ENCODE measurements at regions of chr17 and their contacts with region 1.

Region 1: DNA sequence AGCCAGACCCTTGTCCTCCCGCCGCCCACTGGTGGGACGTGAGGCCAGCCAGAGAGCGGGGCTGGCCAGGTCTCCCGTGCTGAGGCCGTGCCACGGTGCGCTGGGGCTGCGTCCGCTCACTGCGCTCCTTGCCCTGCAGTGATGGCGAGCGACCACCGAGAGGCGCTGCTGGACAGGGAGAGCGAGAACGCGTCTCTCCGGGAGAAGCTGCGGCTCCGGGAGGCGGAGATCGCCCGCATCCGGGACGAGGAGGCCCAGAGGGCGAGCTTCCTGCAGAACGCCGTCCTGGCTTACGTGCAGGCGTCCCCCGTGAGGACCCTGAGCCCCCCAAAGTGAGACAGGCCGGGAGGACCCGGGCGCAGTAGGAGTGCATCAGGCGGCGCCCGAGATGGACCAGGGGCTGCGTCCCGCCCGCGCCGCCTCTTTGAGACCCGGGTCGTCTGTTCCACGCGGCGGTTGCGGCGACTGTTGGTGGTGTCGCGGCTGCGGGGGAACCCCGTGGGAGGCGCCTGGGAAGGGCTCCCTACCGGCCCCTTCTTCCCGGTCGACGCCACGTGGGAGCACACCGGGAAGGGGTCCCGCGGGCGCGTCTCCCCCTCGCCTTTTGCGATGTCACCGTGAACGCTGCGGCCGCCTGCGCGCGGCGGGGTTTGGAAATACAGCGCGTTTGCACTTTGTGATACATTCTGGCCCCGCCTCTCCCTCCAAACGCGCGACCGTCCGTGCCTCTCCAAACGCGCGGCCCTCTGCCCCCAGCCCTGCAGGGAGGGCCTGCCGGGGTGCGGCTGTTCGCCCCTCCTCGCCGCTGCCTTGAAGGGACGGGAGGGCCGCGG is 792 bp upstream of the RAC3 start:
- DNase-seq: peak; percentile 72
- ATAC-seq: peak; percentile 63
- H3K4me3 ChIP-seq: peak overlapping the region; percentile 62 to 71
- H3K27ac ChIP-seq: peak overlapping the region; percentile 93
- H3K4me1 ChIP-seq: peaks cover 10 to 50% of the 10 kb centered on the region in 2 experiments; a peak in 3 of 4 replicates
- H3K27me3 ChIP-seq: no peaks in the 10 kb centered on the region
- CTCF ChIP-seq: peak; percentile 53 to 94 (median 76)
- POLR2A ChIP-seq: no peak
- RAD21 ChIP-seq: peak; percentile 99

Region 2: DNA sequence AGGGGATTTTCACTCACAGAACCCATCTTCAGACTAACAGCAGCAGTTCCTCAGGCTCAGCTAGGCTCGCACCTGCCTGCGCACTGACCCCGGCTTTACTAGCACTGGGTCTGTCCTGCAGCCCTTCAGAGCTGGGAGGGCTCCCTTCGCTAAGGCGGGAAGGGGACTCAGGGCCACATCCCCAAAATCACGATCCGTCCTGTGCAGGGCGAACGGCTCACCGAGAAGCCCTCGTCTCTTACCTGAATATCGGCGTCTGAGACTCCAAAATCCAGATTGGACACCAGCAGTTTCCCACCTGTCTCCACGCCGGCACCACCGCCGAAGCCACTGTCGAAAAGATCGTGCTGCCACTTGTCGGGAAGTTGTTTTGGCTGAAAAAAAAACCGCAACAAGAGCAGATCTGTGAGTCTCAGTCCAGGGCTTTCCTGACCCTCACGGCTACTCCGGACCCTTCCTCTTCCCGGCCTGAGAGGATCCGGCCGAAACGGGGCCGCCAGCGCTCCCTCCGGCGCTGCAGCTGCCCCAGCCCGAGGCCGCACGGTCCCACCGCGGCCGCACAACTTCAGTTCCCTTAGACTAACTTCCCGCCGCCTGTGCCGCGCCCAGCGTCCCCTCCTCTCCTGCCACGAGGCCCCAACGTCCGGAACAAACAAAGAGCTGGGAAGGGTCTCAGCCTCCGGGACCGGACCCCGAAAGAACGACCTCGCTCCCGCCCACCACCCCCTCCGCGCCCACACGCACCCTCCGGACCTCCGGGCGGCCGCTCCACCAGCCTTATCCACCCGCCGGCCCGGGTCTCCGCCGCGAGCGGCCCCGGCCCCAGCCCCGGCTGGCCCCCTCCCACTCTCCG is 140.0 kb before region 1 on chr17:
- CTCF ChIA-PET with region 1: no interaction called
- POLR2A ChIA-PET with region 1: no interaction called
- RAD21 ChIA-PET with region 1: no interaction called
- intact Hi-C with region 1: no loop called
- DNase-seq: no peak
- ATAC-seq: no peak
- H3K4me3 ChIP-seq: peak overlapping the region; percentile 95 to 98
- H3K27ac ChIP-seq: peak overlapping the region; percentile 97
- H3K4me1 ChIP-seq: peaks cover 15 to 34% of the 10 kb centered on the region in 2 experiments
- H3K27me3 ChIP-seq: no peaks in the 10 kb centered on the region
- CTCF ChIP-seq: no peak
- POLR2A ChIP-seq: no peak
- RAD21 ChIP-seq: no peak

Region 3: DNA sequence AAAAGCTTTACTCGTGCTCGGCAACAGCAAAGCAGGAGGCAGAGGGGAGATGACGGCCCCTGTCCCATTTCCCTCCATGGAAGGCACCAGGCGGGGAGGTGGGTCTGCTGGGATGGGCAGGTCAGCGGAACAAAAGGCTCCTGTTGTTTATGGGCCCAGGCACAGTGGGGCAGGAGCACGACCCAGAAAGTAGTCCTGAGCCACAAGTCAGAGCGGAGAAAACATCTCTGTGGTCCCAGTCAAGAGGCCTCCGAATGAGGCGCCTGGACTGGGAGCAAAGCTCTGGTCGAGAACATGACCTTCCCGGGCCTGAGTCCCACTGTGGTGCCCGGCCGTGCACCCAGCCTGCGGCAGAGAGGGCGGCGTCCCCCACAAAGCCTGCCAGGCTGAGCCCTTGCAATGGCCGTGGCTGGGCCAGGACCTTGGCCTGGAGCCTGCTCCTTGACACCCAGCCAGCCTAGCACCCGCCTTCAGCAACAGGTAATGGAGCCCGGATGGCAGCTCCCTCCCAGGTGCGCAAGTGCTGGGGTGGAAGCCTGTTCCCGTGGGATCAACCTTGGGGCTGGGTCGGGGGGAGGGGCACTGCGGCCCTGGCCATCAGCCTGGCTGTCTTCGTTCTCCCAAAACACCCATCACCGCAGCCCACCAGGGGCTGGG is 17.4 kb after region 1 on chr17:
- CTCF ChIA-PET with region 1: no interaction called
- POLR2A ChIA-PET with region 1: no interaction called
- RAD21 ChIA-PET with region 1: no interaction called
- intact Hi-C with region 1: no loop called
- DNase-seq: no peak
- ATAC-seq: no peak
- H3K4me3 ChIP-seq: no peak overlapping the region
- H3K27ac ChIP-seq: no peak overlapping the region; the same call in 1 of the 2 replicates
- H3K4me1 ChIP-seq: peaks cover 8 to 15% of the 10 kb centered on the region in 2 experiments; a peak in 3 of 4 replicates
- H3K27me3 ChIP-seq: no peaks in the 10 kb centered on the region
- CTCF ChIP-seq: no peak
- POLR2A ChIP-seq: no peak
- RAD21 ChIP-seq: no peak

Region 4: GRCh38 chr17:82105882-82106687 is 75.4 kb after region 1 on chr17:
- CTCF ChIA-PET with region 1: interaction called, 15 read pairs
- POLR2A ChIA-PET with region 1: no interaction called
- RAD21 ChIA-PET with region 1: interaction called in 1 of 2 experiments, 4 read pairs
- intact Hi-C with region 1: no loop called
- DNase-seq: peak; percentile 82
- ATAC-seq: peak; percentile 95
- H3K4me3 ChIP-seq: peak overlapping the region; percentile 68 to 70
- H3K27ac ChIP-seq: peak overlapping the region; percentile 94
- H3K4me1 ChIP-seq: peaks cover 37 to 55% of the 10 kb centered on the region in 2 experiments
- H3K27me3 ChIP-seq: no peaks in the 10 kb centered on the region
- CTCF ChIP-seq: peak in 2 of 3 experiments; percentile 71 to 91; a peak in 4 of 6 replicates
- POLR2A ChIP-seq: peak; percentile 95
- RAD21 ChIP-seq: no peak

Region 5: DNA sequence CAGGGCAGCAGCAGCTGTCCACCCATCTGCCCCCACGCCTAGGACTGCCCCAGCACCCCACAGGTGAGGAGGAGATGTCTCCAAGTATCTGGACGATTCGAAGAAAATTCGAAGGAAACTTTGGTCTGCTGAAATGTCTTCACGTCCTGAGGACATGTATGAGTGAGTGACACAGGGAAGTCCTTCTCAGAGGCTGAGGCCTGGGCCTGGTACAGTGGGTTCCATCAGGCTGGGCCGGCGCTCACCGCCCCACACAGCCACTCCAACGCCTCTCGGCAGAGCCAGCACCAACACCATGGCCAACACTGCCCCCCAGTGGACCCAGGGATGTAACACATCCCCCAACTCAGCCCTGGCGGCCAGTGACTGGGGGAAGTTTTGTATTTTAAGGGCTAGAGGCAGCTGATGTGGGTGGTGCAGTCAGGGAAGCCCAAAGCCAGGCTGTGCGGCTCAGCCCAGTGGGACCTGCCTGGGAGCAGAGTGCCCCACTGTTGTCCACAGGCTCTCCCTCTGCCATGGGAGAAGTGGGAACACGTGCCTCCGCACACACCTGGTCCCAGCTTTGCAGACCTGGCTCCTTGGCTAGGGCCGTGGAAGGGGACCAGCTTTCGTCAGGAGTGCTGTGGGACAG is 123.2 kb after region 1 on chr17:
- CTCF ChIA-PET with region 1: interaction called, 16 read pairs
- POLR2A ChIA-PET with region 1: no interaction called
- RAD21 ChIA-PET with region 1: no interaction called
- intact Hi-C with region 1: loop called (anchors 1 kb)
- DNase-seq: peak; percentile 54
- ATAC-seq: peak; percentile 96
- H3K4me3 ChIP-seq: no peak overlapping the region
- H3K27ac ChIP-seq: no peak overlapping the region
- H3K4me1 ChIP-seq: no peaks in the 10 kb centered on the region; a peak in 1 of 4 replicates
- H3K27me3 ChIP-seq: no peaks in the 10 kb centered on the region
- CTCF ChIP-seq: peak; percentile 95 to 99 (median 98)
- POLR2A ChIP-seq: no peak
- RAD21 ChIP-seq: peak; percentile 97

Region 6: DNA sequence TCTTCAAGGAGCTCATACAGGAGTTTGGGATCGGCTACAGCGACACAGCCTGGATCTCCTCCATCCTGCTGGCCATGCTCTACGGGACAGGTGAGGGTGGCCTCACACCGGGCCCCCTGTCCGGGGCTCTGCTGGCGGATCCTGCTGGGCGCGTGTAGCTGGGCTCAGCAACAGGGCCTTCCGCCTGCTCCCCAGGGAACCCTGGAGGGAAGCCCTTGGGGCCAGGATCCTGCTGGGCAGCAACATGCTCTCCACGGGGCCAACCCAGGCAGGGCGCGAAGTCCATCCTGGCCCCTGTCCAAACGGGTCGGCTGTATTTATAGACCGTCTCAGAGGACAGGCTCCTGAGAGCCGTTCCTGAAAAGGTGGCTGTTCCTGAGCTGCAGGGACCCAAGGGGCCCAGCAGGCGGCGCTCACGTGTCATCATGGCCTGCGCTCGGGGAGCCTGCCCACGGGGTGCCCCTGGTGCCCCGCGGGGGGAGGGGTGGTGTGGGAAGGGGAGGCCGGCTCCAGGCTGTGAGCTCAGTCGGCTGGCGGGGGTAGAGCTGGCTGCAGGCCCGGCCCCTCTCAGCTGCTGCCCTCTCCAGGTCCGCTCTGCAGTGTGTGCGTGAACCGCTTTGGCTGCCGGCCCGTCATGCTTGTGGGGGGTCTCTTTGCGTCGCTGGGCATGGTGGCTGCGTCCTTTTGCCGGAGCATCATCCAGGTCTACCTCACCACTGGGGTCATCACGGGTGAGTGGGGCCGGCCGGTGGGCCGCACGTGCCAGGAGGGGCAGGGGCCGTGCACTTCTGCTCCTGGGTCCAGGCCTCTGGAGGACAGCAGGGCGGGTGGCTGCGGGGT is 205.7 kb after region 1 on chr17:
- CTCF ChIA-PET with region 1: interaction called, 14 read pairs
- POLR2A ChIA-PET with region 1: no interaction called
- RAD21 ChIA-PET with region 1: no interaction called
- intact Hi-C with region 1: no loop called
- DNase-seq: no peak
- ATAC-seq: peak; percentile 44
- H3K4me3 ChIP-seq: no peak overlapping the region
- H3K27ac ChIP-seq: peak overlapping the region; percentile 62
- H3K4me1 ChIP-seq: peaks cover 50 to 95% of the 10 kb centered on the region in 2 experiments
- H3K27me3 ChIP-seq: no peaks in the 10 kb centered on the region
- CTCF ChIP-seq: peak in 2 of 3 experiments; percentile 97 to 98; a peak in 4 of 6 replicates
- POLR2A ChIP-seq: no peak
- RAD21 ChIP-seq: no peak

Region 7: GRCh38 chr17:82338858-82339633 is 308.4 kb after region 1 on chr17:
- CTCF ChIA-PET with region 1: interaction called, 3 read pairs
- POLR2A ChIA-PET with region 1: no interaction called
- RAD21 ChIA-PET with region 1: no interaction called
- intact Hi-C with region 1: loop called (anchors 5 kb)
- DNase-seq: peak; percentile 72
- ATAC-seq: peak; percentile 67
- H3K4me3 ChIP-seq: peak overlapping the region; percentile 49 to 61
- H3K27ac ChIP-seq: peak overlapping the region; percentile 96
- H3K4me1 ChIP-seq: peaks cover 59 to 73% of the 10 kb centered on the region in 2 experiments
- H3K27me3 ChIP-seq: no peaks in the 10 kb centered on the region
- CTCF ChIP-seq: no peak
- POLR2A ChIP-seq: no peak
- RAD21 ChIP-seq: no peak

Region 8: GRCh38 chr17:82351716-82352488 is 321.2 kb after region 1 on chr17:
- CTCF ChIA-PET with region 1: interaction called, 3 read pairs
- POLR2A ChIA-PET with region 1: no interaction called
- RAD21 ChIA-PET with region 1: interaction called in 1 of 2 experiments, 3 read pairs
- intact Hi-C with region 1: loop called (anchors 5 kb)
- DNase-seq: peak; percentile 91
- ATAC-seq: peak; percentile 92
- H3K4me3 ChIP-seq: no peak overlapping the region
- H3K27ac ChIP-seq: no peak overlapping the region
- H3K4me1 ChIP-seq: peaks cover 2 to 19% of the 10 kb centered on the region in 2 experiments; a peak in 3 of 4 replicates
- H3K27me3 ChIP-seq: no peaks in the 10 kb centered on the region
- CTCF ChIP-seq: peak; percentile 97 to 99 (median 98)
- POLR2A ChIP-seq: no peak
- RAD21 ChIP-seq: peak; percentile 100